ENCODE measurements at regions of chr2 and their contacts with region 1.

Region 1: GRCh38 chr2:119378566-119378965 is 11.8 kb downstream of the DBI start:
- H3K4me3 ChIP-seq: no peak overlapping the region
- H3K27ac ChIP-seq: no peak overlapping the region
- H3K4me1 ChIP-seq: no peaks in the 10 kb centered on the region
- CTCF ChIP-seq: no peak

Region 2: DNA sequence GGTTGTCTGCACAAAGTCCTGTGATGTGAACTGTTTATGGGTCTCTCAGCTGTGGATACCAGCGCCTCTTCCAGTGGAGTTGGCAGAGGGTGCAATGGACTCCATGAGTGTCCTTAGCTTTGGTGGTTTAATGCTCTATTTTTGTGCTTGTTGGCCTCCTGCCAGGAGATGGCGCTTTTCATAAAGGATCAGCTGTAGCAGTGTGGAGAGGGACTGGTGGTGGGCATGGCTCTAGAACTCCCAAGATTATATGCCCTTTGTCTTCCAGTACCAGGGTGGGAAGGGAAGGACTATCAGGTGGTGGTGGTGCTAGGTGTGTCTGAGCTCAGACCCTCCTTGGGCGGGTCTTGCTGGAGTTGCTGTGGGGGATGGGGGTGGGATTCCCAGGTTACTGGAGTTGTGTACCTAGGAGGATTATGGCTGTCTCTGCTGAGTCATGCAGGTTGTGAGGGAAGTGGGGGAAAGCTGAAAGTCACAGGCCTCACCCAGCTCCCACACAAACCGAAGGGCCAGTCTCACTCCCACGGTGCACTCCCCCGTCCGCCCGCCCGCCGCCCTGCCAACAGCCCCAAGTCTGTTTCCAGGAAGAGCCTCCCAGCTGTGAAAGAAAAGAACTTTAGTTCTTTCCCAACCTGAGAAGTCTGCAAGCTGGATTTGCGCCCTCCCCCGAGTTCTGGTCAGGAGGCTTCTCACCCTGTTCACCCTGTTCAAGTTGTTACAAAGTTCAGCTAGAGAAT is 328.4 kb before region 1 on chr2:
- CTCF ChIA-PET with region 1: no interaction called
- POLR2A ChIA-PET with region 1: no interaction called
- H3K4me3 ChIP-seq: no peak overlapping the region
- H3K27ac ChIP-seq: no peak overlapping the region
- H3K4me1 ChIP-seq: no peaks in the 10 kb centered on the region
- CTCF ChIP-seq: no peak

Region 3: DNA sequence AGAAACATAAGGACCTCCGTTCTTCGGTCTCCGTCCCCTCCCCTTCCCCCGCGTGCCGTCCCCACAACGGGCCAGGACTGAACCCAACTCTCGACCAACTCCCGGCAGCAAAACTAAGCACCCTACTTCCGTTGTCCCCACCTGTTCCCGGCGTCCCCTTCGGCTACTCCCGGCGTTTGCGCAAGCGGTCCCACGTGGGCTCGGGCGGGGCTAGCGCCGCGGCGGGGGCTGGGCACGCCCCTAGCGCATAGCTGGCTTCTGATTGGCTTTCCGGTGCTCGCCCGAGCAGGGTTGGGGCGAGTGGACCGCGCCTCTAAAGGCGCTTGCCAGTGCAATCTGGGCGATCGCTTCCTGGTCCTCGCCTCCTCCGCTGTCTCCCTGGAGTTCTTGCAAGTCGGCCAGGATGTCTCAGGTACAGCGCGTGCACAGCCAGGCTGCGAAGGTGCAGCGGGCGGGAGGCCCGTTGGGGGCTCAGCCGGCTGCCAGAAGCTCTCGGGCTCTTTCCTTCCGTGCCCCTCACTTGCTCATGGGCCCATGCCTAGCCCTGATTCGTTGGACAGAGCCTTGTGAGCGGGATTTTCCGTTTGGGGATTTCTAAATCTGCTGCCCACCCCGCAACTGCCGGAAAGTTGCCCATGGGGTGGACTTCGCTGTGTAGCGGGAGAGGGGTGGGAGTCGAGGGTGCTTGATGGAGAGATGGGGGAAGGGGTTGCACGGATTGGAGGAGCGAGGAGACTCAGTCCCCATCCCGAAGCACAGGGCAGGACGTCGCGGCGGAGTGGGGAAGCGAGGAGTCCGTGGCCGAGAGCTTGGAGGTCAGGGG is 11.7 kb before region 1 on chr2 and contains the starts of genes C2orf76 and DBI:
- CTCF ChIA-PET with region 1: no interaction called
- POLR2A ChIA-PET with region 1: interaction called, 14 read pairs
- H3K4me3 ChIP-seq: peak within 1 kb of the TSS; percentile 67
- H3K27ac ChIP-seq: peak within 1 kb of the TSS; percentile 69
- H3K4me1 ChIP-seq: no peaks in the 10 kb centered on the region; the same call in 1 of the 2 replicates
- CTCF ChIP-seq: no peak

Measured in HEK293 (cell line).